GM12878 (cell line): ENCODE measurements at regions of chr2 and their contacts with region 1.

Region 1: DNA sequence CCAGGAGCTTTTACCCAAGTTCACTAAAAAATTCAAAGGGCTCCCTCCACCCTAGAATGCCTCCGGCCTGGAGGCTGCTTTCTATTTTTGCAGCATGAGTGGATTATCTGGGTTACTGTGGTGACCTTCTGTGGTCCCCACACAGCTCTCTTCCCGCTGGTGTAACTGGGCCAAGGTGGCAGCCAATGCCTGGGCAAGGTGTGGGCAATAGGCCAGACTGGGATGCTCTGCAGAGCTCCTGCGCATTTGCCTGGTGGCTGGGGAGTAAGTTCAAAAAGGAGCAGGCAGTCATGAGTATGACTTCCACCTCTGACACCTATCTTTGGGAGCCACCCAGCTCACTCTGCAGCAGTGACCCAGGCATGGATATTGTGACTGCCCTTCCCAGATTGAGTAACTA is 130.5 kb upstream of the SPRED2 start:
- DNase-seq: no peak
- ATAC-seq: no peak
- H3K4me3 ChIP-seq: no peak overlapping the region
- H3K27ac ChIP-seq: no peak overlapping the region
- H3K4me1 ChIP-seq: 0 out of 2 replicates have a peak, but pooled peaks cover 4% of the 10 kb centered on the region
- H3K27me3 ChIP-seq: no peaks in the 10 kb centered on the region
- CTCF ChIP-seq: no peak
- EP300 ChIP-seq: no peak
- POLR2A ChIP-seq: no peak
- RAD21 ChIP-seq: no peak

Region 2: DNA sequence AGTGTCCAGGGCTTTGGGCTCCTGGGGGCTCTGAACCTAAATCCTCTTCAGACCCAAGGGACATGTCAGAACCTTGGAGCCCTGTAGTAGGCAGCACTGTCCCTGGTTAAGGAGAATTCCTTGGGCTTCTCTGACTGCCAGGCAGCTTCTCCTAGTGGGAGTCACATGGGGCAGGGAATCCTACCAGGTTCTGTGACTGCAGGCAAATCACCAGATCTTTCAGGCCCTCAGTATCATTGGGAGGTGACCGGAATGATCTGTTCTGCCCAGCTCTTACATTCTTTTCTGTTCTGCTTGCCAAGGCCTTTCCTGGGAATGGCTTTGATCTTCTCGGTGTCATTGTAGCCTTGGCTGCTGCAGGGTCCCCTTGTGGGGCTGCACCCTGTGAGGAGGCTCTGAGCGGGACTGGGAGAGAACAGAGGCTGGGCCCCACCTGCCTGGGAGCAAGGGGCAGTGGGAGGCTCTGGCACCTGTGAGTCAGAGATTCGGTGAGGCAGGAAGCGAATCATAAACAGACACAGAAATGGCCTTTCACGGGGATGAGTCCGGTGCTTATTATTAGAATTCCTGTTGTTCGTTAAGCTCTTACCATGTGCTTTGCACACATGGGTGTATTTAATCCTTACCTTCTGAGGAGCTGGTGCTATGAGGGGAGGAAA is 492.6 kb before region 1 on chr2:
- CTCF ChIA-PET with region 1: interaction called, 7 read pairs
- POLR2A ChIA-PET with region 1: no interaction called
- RAD21 ChIA-PET with region 1: no interaction called
- SMC1A ChIA-PET with region 1: no interaction called
- in situ Hi-C with region 1: loop called (anchors 5 kb)
- intact Hi-C with region 1: no loop called
- DNase-seq: no peak
- ATAC-seq: no peak
- H3K4me3 ChIP-seq: no peak overlapping the region
- H3K27ac ChIP-seq: no peak overlapping the region
- H3K4me1 ChIP-seq: peaks cover 16% of the 10 kb centered on the region
- H3K27me3 ChIP-seq: no peaks in the 10 kb centered on the region
- CTCF ChIP-seq: no peak
- EP300 ChIP-seq: no peak
- POLR2A ChIP-seq: no peak
- RAD21 ChIP-seq: no peak

Region 3: DNA sequence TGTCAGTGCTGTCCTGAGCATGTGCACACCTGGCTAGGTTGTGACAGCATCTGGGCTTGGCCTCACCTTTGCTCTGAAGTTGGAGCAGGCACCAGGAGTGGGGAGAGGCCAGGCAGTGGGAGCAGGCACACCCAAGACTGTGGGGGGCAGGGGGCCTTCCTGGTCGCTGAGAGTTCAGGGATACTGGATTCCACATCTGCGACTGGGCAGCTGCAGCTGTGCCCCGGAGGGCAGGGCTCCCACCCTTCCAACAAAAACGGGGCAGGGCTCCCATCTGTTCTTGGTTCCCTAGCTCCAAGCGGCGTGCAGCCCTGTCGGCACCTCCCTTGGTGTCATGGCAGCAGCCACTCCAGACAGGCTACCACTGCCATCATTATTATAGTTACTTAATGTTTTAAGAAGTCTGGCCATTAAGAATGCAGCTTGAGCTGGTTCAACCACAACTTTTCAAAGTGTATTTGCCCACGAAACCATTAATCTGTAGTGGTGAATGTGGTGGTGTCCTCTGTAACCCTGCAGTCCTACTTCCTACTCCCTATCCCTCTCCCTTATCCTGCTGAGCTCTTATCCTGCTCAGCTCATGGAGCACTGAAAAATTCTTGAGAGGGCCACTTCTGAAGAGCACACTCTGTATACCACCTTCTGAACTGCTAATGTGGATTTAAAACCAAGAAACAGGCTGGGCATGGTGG is 385.0 kb before region 1 on chr2:
- CTCF ChIA-PET with region 1: no interaction called
- POLR2A ChIA-PET with region 1: no interaction called
- RAD21 ChIA-PET with region 1: no interaction called
- SMC1A ChIA-PET with region 1: no interaction called
- in situ Hi-C with region 1: no loop called
- intact Hi-C with region 1: no loop called
- DNase-seq: no peak
- ATAC-seq: no peak
- H3K4me3 ChIP-seq: no peak overlapping the region
- H3K27ac ChIP-seq: no peak overlapping the region
- H3K4me1 ChIP-seq: no peaks in the 10 kb centered on the region
- H3K27me3 ChIP-seq: no peaks in the 10 kb centered on the region; a peak in 1 of 4 replicates
- CTCF ChIP-seq: no peak
- EP300 ChIP-seq: no peak
- POLR2A ChIP-seq: no peak
- RAD21 ChIP-seq: no peak

Region 4: DNA sequence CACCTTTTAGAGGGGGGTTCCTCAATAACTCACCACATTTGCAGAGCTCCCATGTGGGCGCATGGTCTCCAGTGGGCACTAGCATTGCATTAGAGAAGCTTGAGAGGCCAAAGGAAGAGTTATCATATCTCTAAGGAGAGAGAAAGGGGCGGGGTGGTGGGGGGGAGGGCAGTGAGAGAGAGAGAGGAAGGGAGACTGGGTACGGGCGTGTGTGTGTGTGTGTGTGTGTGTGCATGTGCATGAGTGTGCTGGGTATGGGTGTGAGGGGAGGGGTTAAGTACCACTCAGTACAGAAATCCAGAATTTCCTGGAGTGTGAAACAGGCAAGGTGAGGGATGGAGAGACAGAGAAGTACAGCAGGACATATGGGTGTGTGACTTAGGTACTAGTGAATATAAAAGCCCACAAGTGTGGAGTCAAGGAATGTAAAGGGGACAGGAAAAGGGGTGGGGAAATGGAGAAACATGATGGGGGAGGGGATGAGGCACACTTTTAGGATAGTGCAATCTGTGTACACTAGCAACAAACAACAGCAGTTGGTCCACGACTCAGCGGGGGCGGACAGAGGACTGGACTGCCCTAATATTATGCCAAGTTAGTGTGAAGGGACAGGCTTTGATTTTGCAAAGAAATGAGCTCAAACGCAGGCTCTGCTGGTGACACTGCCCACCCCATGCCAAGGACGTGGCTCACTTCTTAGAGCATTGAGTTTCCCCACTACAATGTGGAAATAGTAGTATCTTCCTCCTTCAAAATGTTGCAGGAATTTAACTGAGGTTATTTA is 221.8 kb before region 1 on chr2:
- CTCF ChIA-PET with region 1: no interaction called
- POLR2A ChIA-PET with region 1: no interaction called
- RAD21 ChIA-PET with region 1: no interaction called
- SMC1A ChIA-PET with region 1: no interaction called
- in situ Hi-C with region 1: no loop called
- intact Hi-C with region 1: no loop called
- DNase-seq: no peak
- ATAC-seq: no peak
- H3K4me3 ChIP-seq: no peak overlapping the region
- H3K27ac ChIP-seq: no peak overlapping the region
- H3K4me1 ChIP-seq: peaks cover 4% of the 10 kb centered on the region; the same call in 1 of the 2 replicates
- H3K27me3 ChIP-seq: no peaks in the 10 kb centered on the region
- CTCF ChIP-seq: no peak
- EP300 ChIP-seq: no peak
- POLR2A ChIP-seq: no peak
- RAD21 ChIP-seq: no peak

Region 5: DNA sequence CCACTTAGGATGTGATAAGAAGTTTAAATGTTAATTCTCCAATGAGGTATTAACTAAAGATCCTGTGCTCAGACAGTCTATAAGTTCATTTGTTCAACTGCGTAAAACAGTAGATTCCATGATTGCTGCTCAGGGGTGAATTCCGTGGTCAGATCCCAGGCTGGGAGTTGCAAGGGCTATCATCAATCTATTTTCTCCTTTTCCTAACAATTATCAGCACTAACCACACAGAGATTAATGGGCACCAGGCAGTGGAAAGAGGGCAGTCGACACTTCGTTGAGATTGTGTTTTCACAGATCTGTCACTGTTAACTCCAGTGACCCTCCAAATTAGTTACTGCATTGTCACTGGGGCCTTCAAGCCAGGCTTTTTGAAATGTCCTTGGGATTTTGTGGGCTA is 23.6 kb after region 1 on chr2:
- CTCF ChIA-PET with region 1: no interaction called
- POLR2A ChIA-PET with region 1: no interaction called
- RAD21 ChIA-PET with region 1: no interaction called
- SMC1A ChIA-PET with region 1: no interaction called
- in situ Hi-C with region 1: no loop called
- intact Hi-C with region 1: no loop called
- DNase-seq: no peak
- ATAC-seq: no peak
- H3K4me3 ChIP-seq: no peak overlapping the region
- H3K27ac ChIP-seq: no peak overlapping the region
- H3K4me1 ChIP-seq: no peaks in the 10 kb centered on the region
- H3K27me3 ChIP-seq: no peaks in the 10 kb centered on the region
- CTCF ChIP-seq: no peak
- EP300 ChIP-seq: no peak
- POLR2A ChIP-seq: no peak
- RAD21 ChIP-seq: no peak

Region 6: DNA sequence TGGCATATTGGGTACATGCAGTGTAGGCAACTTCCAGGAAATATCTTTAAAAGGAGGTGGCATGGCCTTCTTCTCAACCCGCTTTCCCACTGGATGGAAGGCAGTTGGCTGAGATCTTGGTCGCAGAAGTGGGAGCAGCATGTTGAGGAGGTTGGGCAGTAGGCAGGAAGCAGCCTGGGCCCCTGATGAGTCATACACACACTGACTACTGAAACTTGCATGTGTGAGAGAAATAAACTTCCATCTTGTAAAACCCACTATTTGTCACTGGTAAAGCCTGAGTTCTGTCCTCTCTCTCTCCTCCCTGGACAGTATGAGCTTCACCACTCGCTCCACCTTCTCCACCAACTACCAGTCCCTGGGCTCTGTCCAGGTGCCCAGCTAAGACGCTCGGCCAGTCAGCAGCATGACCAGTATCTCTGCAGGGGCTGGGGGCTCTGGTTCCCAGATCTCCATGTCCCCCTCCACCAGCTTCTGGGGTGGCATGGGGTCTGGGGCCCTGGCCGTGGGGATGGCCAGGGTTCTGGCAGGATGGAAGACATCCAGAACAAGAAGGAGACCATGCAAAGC is 103.4 kb after region 1 on chr2:
- CTCF ChIA-PET with region 1: no interaction called
- POLR2A ChIA-PET with region 1: no interaction called
- RAD21 ChIA-PET with region 1: no interaction called
- SMC1A ChIA-PET with region 1: no interaction called
- in situ Hi-C with region 1: no loop called
- intact Hi-C with region 1: no loop called
- DNase-seq: peak; percentile 54
- ATAC-seq: peak; percentile 98
- H3K4me3 ChIP-seq: no peak overlapping the region
- H3K27ac ChIP-seq: peak overlapping the region; percentile 76
- H3K4me1 ChIP-seq: peaks cover 14% of the 10 kb centered on the region
- H3K27me3 ChIP-seq: no peaks in the 10 kb centered on the region
- CTCF ChIP-seq: no peak
- EP300 ChIP-seq: peak in 1 of 2 experiments; percentile 15; a peak in 1 of 4 replicates
- POLR2A ChIP-seq: no peak
- RAD21 ChIP-seq: 0 out of 2 replicates have a peak, but pooled peaks have one; percentile 6